ENCODE measurements at regions of chr19 and their contacts with region 1.

Region 1: GRCh38 chr19:38374429-38375176 is at the start of gene PSMD8:
- DNase-seq: peak; percentile 99
- H3K4me3 ChIP-seq: peak within 1 kb of the TSS; percentile 79 to 94 (median 93)
- H3K27ac ChIP-seq: peak within 1 kb of the TSS; percentile 83
- H3K4me1 ChIP-seq: peaks cover 14% of the 10 kb centered on the region
- H3K27me3 ChIP-seq: no peaks in the 10 kb centered on the region
- CTCF ChIP-seq: peak in 1 of 2 donors; percentile 33
- total RNA-seq, gene PSMD8: 247 to 401 TPM

Region 2: GRCh38 chr19:38270587-38271167 is 103.9 kb before region 1 on chr19:
- CTCF ChIA-PET with region 1: no interaction called
- dilution Hi-C with region 1: no loop called
- in situ Hi-C with region 1: no loop called
- intact Hi-C with region 1: no loop called
- DNase-seq: no peak
- H3K4me3 ChIP-seq: no peak overlapping the region
- H3K27ac ChIP-seq: no peak overlapping the region
- H3K4me1 ChIP-seq: peaks cover 54% of the 10 kb centered on the region
- H3K27me3 ChIP-seq: no peaks in the 10 kb centered on the region
- CTCF ChIP-seq: no peak

Region 3: GRCh38 chr19:38319421-38320258 is 55.0 kb before region 1 on chr19 and contains the start of gene KCNK6:
- CTCF ChIA-PET with region 1: no interaction called
- dilution Hi-C with region 1: no loop called
- in situ Hi-C with region 1: no loop called
- intact Hi-C with region 1: no loop called
- DNase-seq: peak; percentile 71
- H3K4me3 ChIP-seq: peak within 1 kb of the TSS; percentile 57 to 80 (median 78)
- H3K27ac ChIP-seq: peak within 1 kb of the TSS; percentile 52
- H3K4me1 ChIP-seq: peaks cover 52% of the 10 kb centered on the region
- H3K27me3 ChIP-seq: no peaks in the 10 kb centered on the region
- CTCF ChIP-seq: no peak
- total RNA-seq, gene KCNK6: 14.2 to 46.6 TPM

Region 4: GRCh38 chr19:38361633-38362075 is 12.9 kb before region 1 on chr19:
- CTCF ChIA-PET with region 1: no interaction called
- dilution Hi-C with region 1: no loop called
- in situ Hi-C with region 1: no loop called
- intact Hi-C with region 1: loop called (anchors 1 kb)
- DNase-seq: peak; percentile 81
- H3K4me3 ChIP-seq: peak overlapping the region; percentile 53 to 76 (median 59)
- H3K27ac ChIP-seq: no peak overlapping the region
- H3K4me1 ChIP-seq: peaks cover 8% of the 10 kb centered on the region
- H3K27me3 ChIP-seq: peaks cover 12% of the 10 kb centered on the region
- CTCF ChIP-seq: no peak